CD8-positive, alpha-beta T cell (primary cell): ENCODE measurements at regions of chr12 and their contacts with region 1.

Region 1: GRCh38 chr12:14960548-14961465 is 594 bp downstream of the ARHGDIB start:
- DNase-seq: peak in 8 of 9 experiments; percentile 37 to 82 (median 60)
- ATAC-seq: peak; percentile 37
- H3K4me3 ChIP-seq: peak overlapping the region; percentile 71 to 85
- H3K4me3 Mint-ChIP-seq: peak overlapping the region; percentile 100
- H3K27ac ChIP-seq: peak overlapping the region; percentile 90 to 96
- H3K27ac Mint-ChIP-seq: peak overlapping the region; percentile 99
- H3K4me1 ChIP-seq: peaks cover 49% of the 10 kb centered on the region
- H3K4me1 Mint-ChIP-seq: peaks cover 71% of the 10 kb centered on the region
- H3K27me3 ChIP-seq: no peaks in the 10 kb centered on the region
- H3K27me3 Mint-ChIP-seq: no peaks in the 10 kb centered on the region
- CTCF ChIP-seq: no peak

Region 2: GRCh38 chr12:14257734-14258574 is 702.9 kb before region 1 on chr12:
- CTCF ChIA-PET with region 1: no interaction called
- POLR2A ChIA-PET with region 1: no interaction called
- intact Hi-C with region 1: loop called in 1 of 2 experiments (anchors 10 kb)
- DNase-seq: peak; percentile 60 to 91 (median 84)
- ATAC-seq: peak; percentile 45
- H3K4me3 ChIP-seq: peak overlapping the region in 1 of 2 experiments; percentile 17
- H3K4me3 Mint-ChIP-seq: peak overlapping the region; percentile 73
- H3K27ac ChIP-seq: peak overlapping the region; percentile 72 to 87
- H3K27ac Mint-ChIP-seq: peak overlapping the region; percentile 99
- H3K4me1 ChIP-seq: peaks cover 39% of the 10 kb centered on the region
- H3K4me1 Mint-ChIP-seq: peaks cover 55% of the 10 kb centered on the region
- H3K27me3 ChIP-seq: no peaks in the 10 kb centered on the region
- H3K27me3 Mint-ChIP-seq: no peaks in the 10 kb centered on the region
- CTCF ChIP-seq: no peak

Region 3: GRCh38 chr12:14884458-14884878 is 76.3 kb before region 1 on chr12:
- CTCF ChIA-PET with region 1: no interaction called
- POLR2A ChIA-PET with region 1: interaction called, 5 read pairs
- intact Hi-C with region 1: loop called in 1 of 2 experiments (anchors 2 kb)
- DNase-seq: peak; percentile 69 to 94 (median 89)
- ATAC-seq: peak; percentile 90
- H3K4me3 ChIP-seq: no peak overlapping the region
- H3K4me3 Mint-ChIP-seq: peak overlapping the region; percentile 58
- H3K27ac ChIP-seq: peak overlapping the region in 1 of 2 experiments; percentile 7
- H3K27ac Mint-ChIP-seq: peak overlapping the region; percentile 89
- H3K4me1 ChIP-seq: peaks cover 38% of the 10 kb centered on the region
- H3K4me1 Mint-ChIP-seq: peaks cover 37% of the 10 kb centered on the region
- H3K27me3 ChIP-seq: peaks cover 0 to 6% of the 10 kb centered on the region in 2 experiments
- H3K27me3 Mint-ChIP-seq: peaks cover 7% of the 10 kb centered on the region
- CTCF ChIP-seq: no peak

Region 4: GRCh38 chr12:14948672-14949071 is 12.1 kb before region 1 on chr12:
- CTCF ChIA-PET with region 1: interaction called, 4 read pairs
- POLR2A ChIA-PET with region 1: interaction called, 31 read pairs
- intact Hi-C with region 1: loop called (anchors 1 kb)
- DNase-seq: peak in 7 of 9 experiments; percentile 38 to 91 (median 65)
- ATAC-seq: peak; percentile 86
- H3K4me3 ChIP-seq: peak overlapping the region; percentile 27 to 48
- H3K4me3 Mint-ChIP-seq: peak overlapping the region; percentile 78
- H3K27ac ChIP-seq: peak overlapping the region; percentile 36 to 96
- H3K27ac Mint-ChIP-seq: peak overlapping the region; percentile 94
- H3K4me1 ChIP-seq: peaks cover 91% of the 10 kb centered on the region
- H3K4me1 Mint-ChIP-seq: peaks cover 93% of the 10 kb centered on the region
- H3K27me3 ChIP-seq: no peaks in the 10 kb centered on the region
- H3K27me3 Mint-ChIP-seq: no peaks in the 10 kb centered on the region
- CTCF ChIP-seq: no peak

Region 5: DNA sequence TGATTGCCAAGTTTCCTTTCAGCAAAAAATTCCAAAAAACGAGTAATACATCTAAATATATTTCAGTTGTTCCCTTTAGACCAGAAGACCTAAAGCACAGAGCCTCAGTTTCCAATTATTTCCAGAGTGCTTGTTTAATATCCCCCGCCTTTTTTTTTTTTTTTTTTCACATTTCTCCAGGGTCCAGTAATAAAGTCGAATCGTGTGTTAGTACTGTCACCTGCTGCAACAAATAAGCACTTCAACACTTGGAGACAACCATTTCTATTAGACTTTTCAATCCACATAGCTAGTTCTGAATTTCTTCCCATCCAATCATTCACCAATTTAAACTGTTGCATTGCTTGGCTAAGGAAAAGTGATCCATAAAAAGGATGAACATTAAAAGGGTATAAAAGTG is 25.6 kb after region 1 on chr12:
- CTCF ChIA-PET with region 1: interaction called, 3 read pairs
- POLR2A ChIA-PET with region 1: interaction called, 7 read pairs
- intact Hi-C with region 1: loop called (anchors 2 kb)
- DNase-seq: peak in 2 of 9 experiments; percentile 28 to 43
- ATAC-seq: no peak
- H3K4me3 ChIP-seq: no peak overlapping the region
- H3K4me3 Mint-ChIP-seq: no peak overlapping the region
- H3K27ac ChIP-seq: no peak overlapping the region
- H3K27ac Mint-ChIP-seq: no peak overlapping the region
- H3K4me1 ChIP-seq: peaks cover 31% of the 10 kb centered on the region
- H3K4me1 Mint-ChIP-seq: peaks cover 41% of the 10 kb centered on the region
- H3K27me3 ChIP-seq: no peaks in the 10 kb centered on the region
- H3K27me3 Mint-ChIP-seq: no peaks in the 10 kb centered on the region
- CTCF ChIP-seq: no peak

Region 6: GRCh38 chr12:15004421-15004820 is 43.6 kb after region 1 on chr12:
- CTCF ChIA-PET with region 1: no interaction called
- POLR2A ChIA-PET with region 1: no interaction called
- intact Hi-C with region 1: no loop called
- DNase-seq: no peak
- ATAC-seq: no peak
- H3K4me3 ChIP-seq: no peak overlapping the region
- H3K4me3 Mint-ChIP-seq: no peak overlapping the region
- H3K27ac ChIP-seq: no peak overlapping the region
- H3K27ac Mint-ChIP-seq: no peak overlapping the region
- H3K4me1 ChIP-seq: no peaks in the 10 kb centered on the region
- H3K4me1 Mint-ChIP-seq: no peaks in the 10 kb centered on the region
- H3K27me3 ChIP-seq: peaks cover 0 to 7% of the 10 kb centered on the region in 2 experiments
- H3K27me3 Mint-ChIP-seq: peaks cover 43% of the 10 kb centered on the region
- CTCF ChIP-seq: no peak

Region 7: DNA sequence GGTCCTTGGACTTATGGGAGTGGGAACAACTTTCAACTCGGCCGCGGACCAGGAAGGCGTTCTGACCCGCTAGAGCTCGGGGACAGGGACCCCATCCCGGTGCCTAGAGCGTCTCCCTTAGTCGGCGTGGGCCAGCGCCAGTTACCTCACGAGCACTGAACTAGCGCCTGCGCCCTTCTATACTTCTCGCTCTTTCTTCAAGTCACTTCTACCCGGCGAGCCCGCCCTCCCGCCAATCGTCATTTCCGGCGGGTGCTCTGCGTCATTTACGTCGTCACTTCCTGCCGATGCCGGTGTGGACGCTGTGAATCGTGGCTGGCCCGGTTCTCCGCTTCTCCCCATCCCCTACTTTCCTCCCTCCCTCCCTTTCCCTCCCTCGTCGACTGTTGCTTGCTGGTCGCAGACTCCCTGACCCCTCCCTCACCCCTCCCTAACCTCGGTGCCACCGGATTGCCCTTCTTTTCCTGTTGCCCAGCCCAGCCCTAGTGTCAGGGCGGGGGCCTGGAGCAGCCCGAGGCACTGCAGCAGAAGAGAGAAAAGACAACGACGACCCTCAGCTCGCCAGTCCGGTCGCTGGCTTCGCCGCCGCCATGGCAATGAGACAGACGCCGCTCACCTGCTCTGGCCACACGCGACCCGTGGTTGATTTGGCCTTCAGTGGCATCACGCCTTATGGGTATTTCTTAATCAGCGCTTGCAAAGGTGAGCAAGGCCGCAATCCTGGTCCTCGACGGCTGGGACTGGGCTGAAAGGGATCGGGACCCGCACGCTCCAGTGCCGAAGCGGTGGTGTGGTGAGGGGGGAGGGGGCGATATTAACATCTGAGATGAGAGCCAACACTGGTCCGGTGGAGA is 921.5 kb after region 1 on chr12 and contains the start of gene STRAP:
- CTCF ChIA-PET with region 1: no interaction called
- POLR2A ChIA-PET with region 1: no interaction called
- intact Hi-C with region 1: loop called (anchors 5 to 10 kb)
- DNase-seq: peak; percentile 92 to 98 (median 96)
- ATAC-seq: peak; percentile 94
- H3K4me3 ChIP-seq: peak within 1 kb of the TSS; percentile 85 to 95
- H3K4me3 Mint-ChIP-seq: peak within 1 kb of the TSS; percentile 99
- H3K27ac ChIP-seq: peak within 1 kb of the TSS; percentile 97 to 99
- H3K27ac Mint-ChIP-seq: peak within 1 kb of the TSS; percentile 100
- H3K4me1 ChIP-seq: peaks cover 30% of the 10 kb centered on the region
- H3K4me1 Mint-ChIP-seq: peaks cover 55% of the 10 kb centered on the region
- H3K27me3 ChIP-seq: no peaks in the 10 kb centered on the region
- H3K27me3 Mint-ChIP-seq: no peaks in the 10 kb centered on the region
- CTCF ChIP-seq: no peak
- total RNA-seq, gene STRAP: 180 to 181 TPM

Region 8: GRCh38 chr12:15931590-15932053 is 970.8 kb after region 1 on chr12:
- CTCF ChIA-PET with region 1: no interaction called
- POLR2A ChIA-PET with region 1: no interaction called
- intact Hi-C with region 1: no loop called
- DNase-seq: no peak
- ATAC-seq: no peak
- H3K4me3 ChIP-seq: no peak overlapping the region
- H3K4me3 Mint-ChIP-seq: no peak overlapping the region
- H3K27ac ChIP-seq: no peak overlapping the region
- H3K27ac Mint-ChIP-seq: no peak overlapping the region
- H3K4me1 ChIP-seq: no peaks in the 10 kb centered on the region
- H3K4me1 Mint-ChIP-seq: no peaks in the 10 kb centered on the region
- H3K27me3 ChIP-seq: no peaks in the 10 kb centered on the region
- H3K27me3 Mint-ChIP-seq: no peaks in the 10 kb centered on the region
- CTCF ChIP-seq: no peak